ENCODE measurements at regions of chr9 and their contacts with region 1.

Region 1: DNA sequence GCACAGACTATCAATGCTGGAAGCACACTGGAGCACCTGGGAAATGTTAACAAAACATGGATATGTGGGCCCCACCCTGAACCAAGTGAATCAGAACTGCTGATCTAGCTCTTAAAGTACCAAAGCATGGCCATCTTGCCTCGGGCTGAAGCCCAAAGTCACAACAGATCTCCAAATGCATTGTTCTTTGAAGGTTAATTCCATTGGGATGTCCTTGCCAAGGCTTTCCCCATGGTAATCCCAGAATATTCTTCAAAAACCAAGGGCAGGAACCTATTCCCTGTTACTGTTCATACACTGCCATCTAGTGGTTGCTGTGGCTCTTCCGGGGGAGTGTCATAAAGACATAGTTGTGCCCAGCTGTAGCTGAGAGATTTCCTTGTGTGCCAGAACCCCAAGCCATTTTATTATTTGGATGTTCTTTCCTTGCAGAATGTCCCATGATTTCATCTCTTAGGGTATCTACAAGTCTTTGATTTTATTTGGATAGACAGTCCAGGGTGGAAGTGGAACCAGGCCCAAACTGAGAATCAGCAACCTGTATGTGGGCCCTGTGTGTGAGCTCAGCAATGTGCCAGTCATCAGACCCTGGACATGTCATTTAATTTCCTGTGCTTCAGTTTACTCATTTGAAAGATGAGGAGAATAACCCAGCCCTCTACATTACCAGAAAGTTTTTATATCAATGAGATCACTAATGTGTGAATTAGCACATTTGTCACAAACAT is 290.0 kb downstream of the ACTL7B start:
- DNase-seq: peak; percentile 47 to 54
- H3K4me3 ChIP-seq: no peak overlapping the region
- H3K27ac ChIP-seq: no peak overlapping the region
- H3K4me1 ChIP-seq: no peaks in the 10 kb centered on the region
- H3K27me3 ChIP-seq: no peaks in the 10 kb centered on the region
- CTCF ChIP-seq: peak; percentile 46 to 79 (median 74)
- POLR2A ChIP-seq: no peak

Region 2: GRCh38 chr9:107465467-107466451 is 1100.1 kb before region 1 on chr9:
- intact Hi-C with region 1: loop called (anchors 5 kb)
- DNase-seq: peak; percentile 62 to 67
- H3K4me3 ChIP-seq: peak overlapping the region; percentile 23 to 60 (median 40)
- H3K27ac ChIP-seq: no peak overlapping the region
- H3K4me1 ChIP-seq: peaks cover 0 to 15% of the 10 kb centered on the region in 2 donors
- H3K27me3 ChIP-seq: no peaks in the 10 kb centered on the region
- CTCF ChIP-seq: peak; percentile 50 to 94 (median 76)
- POLR2A ChIP-seq: no peak

Region 3: DNA sequence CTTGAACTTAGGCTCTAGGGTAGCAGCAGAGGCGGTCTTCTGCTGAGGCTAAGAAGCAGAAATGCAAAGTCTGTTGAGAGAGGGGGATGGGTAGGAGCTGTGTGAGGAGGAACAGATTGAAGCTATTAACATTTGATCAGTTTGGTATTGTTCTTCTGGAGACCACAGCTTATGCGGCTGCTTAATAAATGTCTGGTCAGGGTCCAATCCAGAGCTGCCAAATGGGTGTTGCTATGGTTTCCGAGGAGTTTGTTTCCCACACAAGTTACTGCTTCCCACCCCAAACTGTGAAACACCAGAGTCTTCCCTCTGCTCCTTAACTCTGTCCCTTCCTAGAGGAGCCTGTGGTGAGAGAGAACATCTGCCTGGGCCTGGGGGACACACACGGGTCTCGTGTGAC is 934.0 kb before region 1 on chr9:
- intact Hi-C with region 1: loop called (anchors 5 kb)
- DNase-seq: no peak
- H3K4me3 ChIP-seq: no peak overlapping the region
- H3K27ac ChIP-seq: no peak overlapping the region
- H3K4me1 ChIP-seq: peaks cover 0 to 2% of the 10 kb centered on the region in 2 donors
- H3K27me3 ChIP-seq: no peaks in the 10 kb centered on the region
- CTCF ChIP-seq: no peak
- POLR2A ChIP-seq: no peak

Measured in thyroid gland (tissue), 4 donors.